ENCODE measurements at regions of chr16 and their contacts with region 1.

Region 1: GRCh38 chr16:63702984-63703590 is 1418.8 kb downstream of the CDH11 start:
- ATAC-seq: peak in 3 of 8 experiments; percentile 19 to 38 (median 22)
- H3K4me3 ChIP-seq: no peak overlapping the region
- H3K27ac ChIP-seq: no peak overlapping the region
- H3K4me1 ChIP-seq: no peaks in the 10 kb centered on the region

Region 2: DNA sequence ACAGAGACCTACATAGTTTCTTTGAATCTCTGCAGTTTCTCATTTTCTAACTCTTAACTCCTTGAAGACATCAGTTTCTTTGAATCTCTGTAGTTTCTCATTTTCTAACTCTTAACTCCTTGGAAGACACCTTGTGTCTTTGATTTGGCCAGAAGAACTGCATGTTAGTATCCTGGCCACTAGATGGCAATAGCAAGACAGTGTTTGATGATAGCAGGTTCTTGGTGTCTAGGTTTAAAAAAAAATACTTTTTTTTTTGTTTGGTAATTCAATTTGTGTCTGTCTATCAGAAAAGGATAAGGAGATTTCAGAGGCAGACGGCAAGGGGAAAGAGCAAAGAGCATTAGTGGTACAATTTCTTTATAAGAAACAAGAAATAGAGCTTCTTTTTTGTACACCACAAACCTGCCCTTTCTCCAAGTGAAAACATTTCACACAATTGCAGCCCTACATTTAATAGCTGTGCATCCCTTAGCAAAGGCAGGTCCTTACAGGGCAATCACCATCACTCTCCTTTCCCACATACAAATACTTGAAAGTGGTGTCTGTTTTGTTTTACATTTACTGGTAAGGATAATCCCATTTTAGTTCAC is 342.0 kb before region 1 on chr16:
- in situ Hi-C with region 1: loop called in 1 of 9 experiments (anchors 25 kb)
- ATAC-seq: peak in 5 of 8 experiments; percentile 39 to 66 (median 54)
- H3K4me3 ChIP-seq: no peak overlapping the region
- H3K27ac ChIP-seq: no peak overlapping the region
- H3K4me1 ChIP-seq: peaks cover 2 to 15% of the 10 kb centered on the region in 2 donors

Region 3: DNA sequence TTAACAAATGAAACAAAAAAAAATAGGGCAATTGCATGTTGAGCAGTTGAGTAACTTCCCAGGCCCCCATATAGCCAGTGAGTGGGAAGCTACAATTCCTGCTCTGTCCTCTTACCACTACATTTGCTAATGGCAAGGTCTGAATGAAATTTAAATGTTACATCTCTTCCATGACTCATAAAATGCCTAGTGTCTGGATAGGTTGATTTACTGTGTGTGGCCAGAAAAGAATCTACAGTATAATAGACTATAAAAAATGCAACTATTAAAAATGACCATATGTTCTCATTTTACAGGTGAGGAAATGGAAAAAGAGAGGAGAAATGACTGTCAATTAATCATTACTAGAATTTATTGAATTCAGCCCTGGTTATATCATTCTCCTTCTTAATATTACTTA is 219.5 kb after region 1 on chr16:
- in situ Hi-C with region 1: no loop called
- ATAC-seq: peak; percentile 37 to 96 (median 82)
- H3K4me3 ChIP-seq: no peak overlapping the region
- H3K27ac ChIP-seq: no peak overlapping the region
- H3K4me1 ChIP-seq: no peaks in the 10 kb centered on the region

Region 4: DNA sequence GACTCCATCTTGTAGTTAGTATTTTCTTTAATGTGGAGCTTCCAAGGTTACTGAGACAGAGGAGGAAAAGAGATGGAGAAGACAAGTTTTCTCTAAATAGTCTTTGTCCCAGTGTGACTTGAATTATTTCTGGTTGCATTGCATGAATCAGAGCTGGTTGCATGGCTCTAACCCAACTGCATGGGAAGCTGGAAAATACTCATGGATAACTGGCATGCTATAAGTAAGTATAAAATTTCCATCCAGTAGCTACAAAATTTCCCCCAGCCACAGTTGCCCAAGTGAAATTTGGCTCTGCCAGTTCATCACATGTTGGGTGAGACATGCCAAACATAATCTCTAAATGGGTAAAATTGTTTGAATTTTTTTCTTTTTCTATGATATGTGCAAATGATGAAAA is 257.2 kb after region 1 on chr16:
- in situ Hi-C with region 1: no loop called
- ATAC-seq: no peak
- H3K4me3 ChIP-seq: no peak overlapping the region
- H3K27ac ChIP-seq: no peak overlapping the region
- H3K4me1 ChIP-seq: peaks cover 0 to 7% of the 10 kb centered on the region in 2 donors

Measured in motor neuron (in vitro differentiated cells).